ENCODE measurements at regions of chr12 and their contacts with region 1.

Region 1: GRCh38 chr12:68807576-68808387 is at the start of gene MDM2:
- DNase-seq: peak; percentile 81
- ATAC-seq: peak; percentile 86
- H3K4me3 ChIP-seq: peak within 1 kb of the TSS; percentile 96
- H3K27ac ChIP-seq: peak within 1 kb of the TSS; percentile 100
- H3K4me1 ChIP-seq: peaks cover 2% of the 10 kb centered on the region; the same call in 1 of the 2 replicates
- H3K27me3 ChIP-seq: no peaks in the 10 kb centered on the region
- CTCF ChIP-seq: peak; percentile 77
- POLR2A ChIP-seq: peak; percentile 82
- RAD21 ChIP-seq: 0 out of 2 replicates have a peak, but pooled peaks have one; percentile 32
- total RNA-seq, gene MDM2: 196 and 235 TPM in 2 replicates

Region 2: GRCh38 chr12:68223083-68223747 is 584.6 kb before region 1 on chr12:
- CTCF ChIA-PET with region 1: no interaction called
- POLR2A ChIA-PET with region 1: no interaction called
- dilution Hi-C with region 1: no loop called
- in situ Hi-C with region 1: no loop called
- intact Hi-C with region 1: loop called (anchors 10 kb)
- DNase-seq: peak; percentile 89
- ATAC-seq: peak; percentile 97
- H3K4me3 ChIP-seq: peak overlapping the region; percentile 17; the same call in 1 of the 2 replicates
- H3K27ac ChIP-seq: no peak overlapping the region
- H3K4me1 ChIP-seq: peaks cover 2% of the 10 kb centered on the region; the same call in 1 of the 2 replicates
- H3K27me3 ChIP-seq: no peaks in the 10 kb centered on the region
- CTCF ChIP-seq: peak; percentile 95
- POLR2A ChIP-seq: 0 out of 2 replicates have a peak, but pooled peaks have one; percentile 46
- RAD21 ChIP-seq: peak; percentile 99

Region 3: GRCh38 chr12:68358532-68359485 is 449.0 kb before region 1 on chr12:
- CTCF ChIA-PET with region 1: no interaction called
- POLR2A ChIA-PET with region 1: no interaction called
- dilution Hi-C with region 1: no loop called
- in situ Hi-C with region 1: no loop called
- intact Hi-C with region 1: loop called (anchors 2 kb)
- DNase-seq: peak; percentile 82
- ATAC-seq: peak; percentile 93
- H3K4me3 ChIP-seq: no peak overlapping the region
- H3K27ac ChIP-seq: no peak overlapping the region
- H3K4me1 ChIP-seq: peaks cover 9% of the 10 kb centered on the region
- H3K27me3 ChIP-seq: no peaks in the 10 kb centered on the region
- CTCF ChIP-seq: peak; percentile 75
- POLR2A ChIP-seq: no peak
- RAD21 ChIP-seq: peak; percentile 76

Region 4: DNA sequence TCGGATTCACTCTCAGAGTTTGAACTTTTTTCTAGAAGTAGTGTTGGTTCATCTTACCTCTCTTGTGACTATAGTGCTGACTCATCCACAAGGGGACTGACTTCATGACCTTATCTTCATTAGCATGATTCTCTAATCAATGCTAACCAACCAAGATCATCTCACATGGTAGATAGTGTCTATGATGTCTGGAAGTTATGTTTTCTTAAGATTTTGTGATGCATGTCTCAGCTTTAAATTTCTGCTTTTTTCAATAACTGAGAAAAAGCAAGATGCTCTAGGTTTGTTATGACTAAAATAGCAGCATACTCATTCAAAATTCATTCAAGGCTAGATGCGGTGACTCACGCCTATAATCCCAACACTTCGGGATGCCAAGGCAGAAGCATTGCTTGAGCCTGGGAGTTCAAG is 74.1 kb before region 1 on chr12:
- CTCF ChIA-PET with region 1: no interaction called
- POLR2A ChIA-PET with region 1: no interaction called
- dilution Hi-C with region 1: no loop called
- in situ Hi-C with region 1: no loop called
- intact Hi-C with region 1: loop called (anchors 5 kb)
- DNase-seq: peak; percentile 85
- ATAC-seq: peak; percentile 93
- H3K4me3 ChIP-seq: no peak overlapping the region
- H3K27ac ChIP-seq: no peak overlapping the region
- H3K4me1 ChIP-seq: no peaks in the 10 kb centered on the region; the same call in 1 of the 2 replicates
- H3K27me3 ChIP-seq: no peaks in the 10 kb centered on the region
- CTCF ChIP-seq: no peak
- POLR2A ChIP-seq: no peak
- RAD21 ChIP-seq: no peak